Endothelial cell of umbilical vein (primary cell): ENCODE measurements at regions of chr3 and their contacts with region 1.

Region 1: GRCh38 chr3:71305231-71306206 is 278.0 kb downstream of the FOXP1 start:
- DNase-seq: peak; percentile 71
- H3K4me3 ChIP-seq: peak overlapping the region; percentile 24 to 60 (median 41)
- H3K27ac ChIP-seq: peak overlapping the region; percentile 19
- H3K4me1 ChIP-seq: peaks cover 24% of the 10 kb centered on the region
- H3K27me3 ChIP-seq: no peaks in the 10 kb centered on the region
- CTCF ChIP-seq: no peak
- POLR2A ChIP-seq: no peak

Region 2: GRCh38 chr3:71069797-71070196 is 235.7 kb before region 1 on chr3:
- CTCF ChIA-PET with region 1: no interaction called
- POLR2A ChIA-PET with region 1: no interaction called
- dilution Hi-C with region 1: no loop called
- intact Hi-C with region 1: loop called (anchors 1 kb)
- DNase-seq: peak; percentile 74
- H3K4me3 ChIP-seq: no peak overlapping the region
- H3K27ac ChIP-seq: no peak overlapping the region
- H3K4me1 ChIP-seq: peaks cover 30% of the 10 kb centered on the region
- H3K27me3 ChIP-seq: no peaks in the 10 kb centered on the region
- CTCF ChIP-seq: peak; percentile 42 to 52
- POLR2A ChIP-seq: no peak

Region 3: GRCh38 chr3:71176366-71176765 is 129.2 kb before region 1 on chr3:
- CTCF ChIA-PET with region 1: no interaction called
- POLR2A ChIA-PET with region 1: no interaction called
- dilution Hi-C with region 1: no loop called
- intact Hi-C with region 1: no loop called
- DNase-seq: no peak
- H3K4me3 ChIP-seq: no peak overlapping the region
- H3K27ac ChIP-seq: no peak overlapping the region
- H3K4me1 ChIP-seq: no peaks in the 10 kb centered on the region
- H3K27me3 ChIP-seq: no peaks in the 10 kb centered on the region
- CTCF ChIP-seq: no peak
- POLR2A ChIP-seq: no peak

Region 4: GRCh38 chr3:71389911-71390573 is 84.5 kb after region 1 on chr3:
- CTCF ChIA-PET with region 1: no interaction called
- POLR2A ChIA-PET with region 1: no interaction called
- dilution Hi-C with region 1: no loop called
- intact Hi-C with region 1: loop called (anchors 5 kb)
- DNase-seq: peak; percentile 95
- H3K4me3 ChIP-seq: peak overlapping the region in 1 of 3 experiments; percentile 29
- H3K27ac ChIP-seq: peak overlapping the region; percentile 88
- H3K4me1 ChIP-seq: peaks cover 41% of the 10 kb centered on the region
- H3K27me3 ChIP-seq: no peaks in the 10 kb centered on the region
- CTCF ChIP-seq: no peak
- POLR2A ChIP-seq: peak; percentile 37

Region 5: GRCh38 chr3:71456156-71456555 is 150.6 kb after region 1 on chr3:
- CTCF ChIA-PET with region 1: no interaction called
- POLR2A ChIA-PET with region 1: no interaction called
- dilution Hi-C with region 1: no loop called
- intact Hi-C with region 1: no loop called
- DNase-seq: peak; percentile 45
- H3K4me3 ChIP-seq: no peak overlapping the region
- H3K27ac ChIP-seq: no peak overlapping the region
- H3K4me1 ChIP-seq: peaks cover 8% of the 10 kb centered on the region
- H3K27me3 ChIP-seq: no peaks in the 10 kb centered on the region
- CTCF ChIP-seq: peak in 1 of 2 donors; percentile 1
- POLR2A ChIP-seq: no peak